Dorsolateral prefrontal cortex (tissue), 120 donors: ENCODE measurements at regions of chr2 and their contacts with region 1.

Region 1: DNA sequence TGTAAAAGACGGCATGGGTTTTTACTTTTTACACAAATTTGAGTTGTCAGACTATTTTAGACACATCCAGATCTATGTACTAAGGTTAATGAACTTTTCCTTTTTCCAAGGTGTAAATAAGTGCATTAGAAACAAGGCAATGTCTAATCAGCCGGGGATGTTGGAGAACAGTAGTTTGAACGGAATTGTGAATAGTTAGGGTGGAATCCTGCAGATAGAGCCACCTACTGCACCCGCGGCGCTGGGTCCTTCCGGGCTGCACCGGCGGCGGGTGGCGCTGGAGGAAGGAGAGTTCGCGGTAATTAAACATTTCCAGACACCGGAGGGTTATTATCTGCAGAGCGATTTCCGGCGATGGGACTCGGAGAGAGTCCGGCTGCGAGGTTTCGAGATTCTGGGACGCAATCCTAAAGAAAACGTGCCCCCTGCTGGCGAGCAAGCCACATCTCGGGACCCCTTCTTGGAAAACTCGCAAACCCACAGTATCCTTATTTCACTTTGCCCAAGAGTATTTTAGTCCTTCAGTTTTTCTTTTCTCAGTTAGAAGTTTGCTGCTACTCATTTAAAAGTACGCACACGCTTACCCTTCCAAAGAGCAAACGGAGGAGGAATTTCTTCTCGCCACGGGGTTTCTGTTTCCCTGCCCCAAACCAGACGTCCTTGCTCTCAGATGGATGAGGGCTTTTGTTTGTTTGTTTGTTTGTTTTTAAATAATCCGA is 4.5 kb upstream of the OSR1 start:
- DNase-seq: peak in 6 of 10 donors; percentile 33 to 73 (median 55)
- H3K4me3 ChIP-seq: peak overlapping the region; percentile 33 to 69 (median 52)
- H3K27ac ChIP-seq: peak overlapping the region in 1 of 59 donors; percentile 18
- H3K27me3 ChIP-seq: peaks cover 7 to 77% (median 67%) of the 10 kb centered on the region in 45 donors
- CTCF ChIP-seq: peak; percentile 51 to 89 (median 76)

Region 2: GRCh38 chr2:18387441-18388206 is 975.3 kb before region 1 on chr2:
- intact Hi-C with region 1: loop called in 1 of 2 experiments (anchors 5 kb)
- DNase-seq: peak; percentile 62 to 91 (median 76)
- H3K4me3 ChIP-seq: no peak overlapping the region
- H3K27ac ChIP-seq: peak overlapping the region in 3 of 59 donors; percentile 21 to 69 (median 65)
- H3K27me3 ChIP-seq: peaks cover 0 to 3% (median 0%) of the 10 kb centered on the region in 45 donors
- CTCF ChIP-seq: peak; percentile 87 to 99 (median 95)

Region 3: GRCh38 chr2:18435421-18436037 is 927.4 kb before region 1 on chr2:
- intact Hi-C with region 1: loop called in 1 of 2 experiments (anchors 10 kb)
- DNase-seq: no peak
- H3K4me3 ChIP-seq: no peak overlapping the region
- H3K27ac ChIP-seq: no peak overlapping the region
- H3K27me3 ChIP-seq: no peaks in the 10 kb centered on the region
- CTCF ChIP-seq: peak; percentile 37 to 81 (median 63)

Region 4: GRCh38 chr2:18520451-18521425 is 842.2 kb before region 1 on chr2:
- intact Hi-C with region 1: loop called (anchors 2 to 10 kb)
- DNase-seq: peak; percentile 70 to 90 (median 82)
- H3K4me3 ChIP-seq: peak overlapping the region in 19 of 59 donors; percentile 4 to 48 (median 19)
- H3K27ac ChIP-seq: peak overlapping the region in 1 of 59 donors; percentile 9
- H3K27me3 ChIP-seq: peaks cover 0 to 21% (median 0%) of the 10 kb centered on the region in 45 donors
- CTCF ChIP-seq: peak; percentile 75 to 95 (median 89)

Region 5: GRCh38 chr2:18560031-18560796 is 802.7 kb before region 1 on chr2 and contains the start of gene RDH14:
- intact Hi-C with region 1: loop called in 1 of 2 experiments (anchors 5 kb)
- DNase-seq: peak; percentile 92 to 97 (median 96)
- H3K4me3 ChIP-seq: peak within 1 kb of the TSS; percentile 51 to 99 (median 83)
- H3K27ac ChIP-seq: peak within 1 kb of the TSS in 58 of 59 donors; percentile 61 to 97 (median 91)
- H3K27me3 ChIP-seq: no peaks in the 10 kb centered on the region
- CTCF ChIP-seq: peak in 31 of 56 donors; percentile 5 to 52 (median 29)
- total RNA-seq, gene RDH14: 10.3 to 25.2 (median 17.9) TPM

Region 6: GRCh38 chr2:18749912-18750526 is 612.9 kb before region 1 on chr2:
- intact Hi-C with region 1: loop called (anchors 5 kb)
- DNase-seq: peak in 6 of 10 donors; percentile 32 to 71 (median 42)
- H3K4me3 ChIP-seq: no peak overlapping the region
- H3K27ac ChIP-seq: no peak overlapping the region
- H3K27me3 ChIP-seq: no peaks in the 10 kb centered on the region
- CTCF ChIP-seq: peak; percentile 70 to 95 (median 85)

Region 7: DNA sequence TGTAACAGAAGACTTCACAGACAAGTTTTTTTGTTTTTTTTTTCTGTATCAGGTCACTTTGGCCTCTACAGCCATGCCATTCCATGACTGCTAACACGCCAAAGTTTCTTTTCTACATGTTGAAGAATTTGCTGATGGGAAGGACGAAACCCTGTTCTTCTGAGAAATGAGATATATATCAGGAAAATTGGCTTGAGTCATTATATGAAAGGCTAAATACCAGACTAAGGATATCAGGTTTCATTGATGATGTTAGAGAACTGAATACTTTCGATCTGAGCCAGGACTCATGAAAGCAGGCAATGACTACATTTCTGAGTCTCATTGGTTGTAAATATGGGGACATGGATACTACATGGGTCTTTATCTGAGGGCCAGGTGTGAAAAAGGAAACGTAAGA is 186.0 kb before region 1 on chr2:
- intact Hi-C with region 1: no loop called
- DNase-seq: no peak
- H3K4me3 ChIP-seq: no peak overlapping the region
- H3K27ac ChIP-seq: no peak overlapping the region
- H3K27me3 ChIP-seq: no peaks in the 10 kb centered on the region
- CTCF ChIP-seq: no peak

Region 8: GRCh38 chr2:19868705-19869580 is 506.0 kb after region 1 on chr2:
- intact Hi-C with region 1: loop called in 1 of 2 experiments (anchors 5 kb)
- DNase-seq: peak in 1 of 10 donors; percentile 38
- H3K4me3 ChIP-seq: peak overlapping the region in 57 of 59 donors; percentile 18 to 73 (median 47)
- H3K27ac ChIP-seq: no peak overlapping the region
- H3K27me3 ChIP-seq: peaks cover 0 to 33% (median 6%) of the 10 kb centered on the region in 45 donors
- CTCF ChIP-seq: no peak